Left colon (tissue), 2 donors: ENCODE measurements at regions of chr3 and their contacts with region 1.

Region 1: DNA sequence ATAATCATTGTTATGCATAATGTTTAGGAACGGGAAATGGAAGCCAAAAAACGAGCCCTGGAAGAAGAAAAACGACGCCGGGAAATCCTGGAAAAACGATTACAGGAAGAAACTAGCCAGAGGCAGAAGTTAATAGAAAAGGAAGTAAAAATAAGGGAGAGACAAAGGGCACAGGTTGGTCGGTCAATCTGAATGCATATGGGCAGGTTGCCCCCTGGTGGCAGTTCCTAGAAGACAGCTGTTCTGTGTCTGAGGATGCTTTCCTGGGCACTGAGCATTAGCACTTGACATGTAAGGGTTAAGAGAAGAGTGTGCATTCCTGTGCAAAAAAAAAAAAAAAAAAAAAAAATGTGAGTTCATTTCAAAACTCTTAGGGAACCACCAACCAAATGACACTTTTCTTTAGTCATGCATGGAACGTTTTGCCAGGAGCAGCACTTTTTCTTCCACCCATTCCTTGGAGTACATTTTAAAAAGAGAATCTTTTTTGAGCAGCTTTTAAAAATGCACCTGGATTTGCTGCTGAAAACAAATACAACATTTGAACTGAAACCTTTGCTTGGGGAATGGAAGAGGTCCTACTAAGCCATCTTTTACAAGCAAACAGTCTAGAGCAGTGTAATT is 11.1 kb upstream of the ABHD10 start:
- DNase-seq: peak; percentile 78 to 94
- ATAC-seq: peak; percentile 99

Region 2: GRCh38 chr3:111668912-111669488 is 298.8 kb before region 1 on chr3:
- intact Hi-C with region 1: loop called in 1 of 2 experiments (anchors 5 kb)
- DNase-seq: no peak
- ATAC-seq: peak; percentile 89

Region 3: DNA sequence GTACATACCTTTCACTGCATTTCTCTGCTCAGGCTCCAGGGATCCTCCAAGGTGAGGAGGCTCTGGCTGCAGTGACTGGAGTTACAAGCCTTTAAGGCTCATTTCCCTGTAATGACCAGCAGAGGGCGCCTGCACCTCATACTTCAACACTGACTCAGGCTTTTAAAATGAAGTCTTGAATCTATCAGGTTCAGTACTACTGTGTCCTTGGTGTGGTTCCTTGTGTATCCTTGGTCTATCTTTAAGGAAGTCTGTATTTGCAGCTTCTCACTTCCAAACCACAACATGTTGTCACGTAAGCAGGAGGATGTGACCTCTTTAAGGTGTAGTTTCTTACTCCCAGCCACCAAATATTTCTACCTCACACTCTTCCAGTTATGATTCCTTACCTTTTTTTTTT is 250.2 kb before region 1 on chr3:
- intact Hi-C with region 1: loop called in 1 of 2 experiments (anchors 1 kb)
- DNase-seq: peak; percentile 61 to 71
- ATAC-seq: peak; percentile 98

Region 4: GRCh38 chr3:111859974-111860859 is 107.5 kb before region 1 on chr3:
- intact Hi-C with region 1: loop called in 1 of 2 experiments (anchors 10 kb)
- DNase-seq: peak; percentile 56 to 65
- ATAC-seq: peak; percentile 78